K562 (cell line): ENCODE measurements at regions of chr6 and their contacts with region 1.

Region 1: DNA sequence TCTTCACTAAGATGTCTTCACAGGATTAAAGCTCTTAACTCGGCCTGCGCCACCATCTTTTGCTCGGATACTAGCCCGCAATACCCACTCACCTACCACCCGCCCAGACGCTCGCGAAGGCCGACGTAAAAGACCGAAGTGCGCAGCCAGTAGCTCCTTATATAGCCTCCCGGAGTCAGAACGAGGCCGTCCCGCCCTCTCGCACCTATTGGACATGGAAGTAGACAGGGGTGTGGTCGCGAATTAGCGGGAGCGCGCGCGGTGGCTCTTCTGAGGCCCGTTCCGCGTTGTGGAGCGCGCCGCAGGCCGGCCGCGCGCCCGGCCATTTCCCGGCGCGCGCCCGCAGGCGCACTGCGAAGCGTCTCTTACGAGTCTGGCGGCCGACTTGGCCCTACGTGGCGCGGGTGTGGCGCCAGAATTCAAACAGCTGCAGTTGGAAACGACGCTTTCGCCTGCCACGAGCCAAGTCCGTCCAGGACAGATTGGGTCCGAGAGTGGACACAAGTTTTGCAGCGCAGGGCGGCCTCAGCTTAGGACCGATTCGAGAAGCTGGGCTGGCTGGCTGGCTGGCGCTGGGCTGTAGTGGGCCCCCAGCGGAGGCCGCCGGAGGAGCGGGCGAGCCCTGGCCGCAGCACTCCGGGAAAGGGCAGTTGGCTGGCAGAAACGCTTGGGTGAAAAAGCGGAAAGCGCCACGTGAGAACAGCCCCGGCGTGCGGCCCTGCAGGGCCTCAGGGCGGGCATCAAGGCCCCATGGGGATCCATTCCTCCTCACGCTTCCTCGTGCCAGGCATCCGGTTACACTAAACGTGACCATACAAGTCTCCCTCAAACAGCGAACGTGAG is 36.1 kb upstream of the SYNCRIP start:
- DNase-seq: peak; percentile 90 to 99 (median 94)
- ATAC-seq: peak; percentile 80
- H3K4me3 ChIP-seq: peak overlapping the region; percentile 63
- H3K27ac ChIP-seq: peak overlapping the region; percentile 90
- H3K4me1 ChIP-seq: peaks cover 5 to 14% of the 10 kb centered on the region in 2 experiments; a peak in 3 of 5 replicates
- H3K27me3 ChIP-seq: no peaks in the 10 kb centered on the region
- CTCF ChIP-seq: no peak
- EP300 ChIP-seq: no peak
- POLR2A ChIP-seq: peak; percentile 100
- RAD21 ChIP-seq: 0 out of 4 replicates have a peak, but pooled peaks of 1 of the 2 experiments have one; percentile 19

Region 2: GRCh38 chr6:85593438-85594196 is 85.2 kb before region 1 on chr6 and contains the start of gene SNX14:
- CTCF ChIA-PET with region 1: no interaction called
- POLR2A ChIA-PET with region 1: interaction called, 32 read pairs
- in situ Hi-C with region 1: no loop called
- intact Hi-C with region 1: loop called (anchors 5 kb)
- DNase-seq: peak; percentile 88 to 96 (median 90)
- ATAC-seq: peak; percentile 93
- H3K4me3 ChIP-seq: peak within 1 kb of the TSS; percentile 92
- H3K27ac ChIP-seq: peak within 1 kb of the TSS; percentile 97
- H3K4me1 ChIP-seq: peaks cover 13 to 16% of the 10 kb centered on the region in 2 experiments; a peak in 3 of 5 replicates
- H3K27me3 ChIP-seq: no peaks in the 10 kb centered on the region
- CTCF ChIP-seq: no peak; a peak in 1 of 6 replicates
- EP300 ChIP-seq: peak; percentile 30; the same call in 1 of the 2 replicates
- POLR2A ChIP-seq: peak; percentile 88
- RAD21 ChIP-seq: peak in 1 of 2 experiments; percentile 8; a peak in 1 of 4 replicates
- polyA plus RNA-seq, gene SNX14: 46.5 to 61.1 TPM

Region 3: GRCh38 chr6:85620308-85620707 is 58.5 kb before region 1 on chr6:
- CTCF ChIA-PET with region 1: no interaction called
- POLR2A ChIA-PET with region 1: interaction called, 11 read pairs
- in situ Hi-C with region 1: no loop called
- intact Hi-C with region 1: no loop called
- DNase-seq: no peak
- ATAC-seq: no peak; the same call in 2 of the 3 replicates
- H3K4me3 ChIP-seq: no peak overlapping the region
- H3K27ac ChIP-seq: no peak overlapping the region
- H3K4me1 ChIP-seq: no peaks in the 10 kb centered on the region
- H3K27me3 ChIP-seq: no peaks in the 10 kb centered on the region
- CTCF ChIP-seq: no peak
- EP300 ChIP-seq: no peak
- POLR2A ChIP-seq: no peak
- RAD21 ChIP-seq: no peak

Region 4: GRCh38 chr6:85642774-85643536 is 35.9 kb before region 1 on chr6 and contains the start of gene SYNCRIP:
- CTCF ChIA-PET with region 1: no interaction called
- POLR2A ChIA-PET with region 1: interaction called, 188 read pairs
- in situ Hi-C with region 1: loop called (anchors 5 kb)
- intact Hi-C with region 1: loop called (anchors 1 kb)
- DNase-seq: peak; percentile 71 to 98 (median 90)
- ATAC-seq: peak; percentile 86
- H3K4me3 ChIP-seq: peak within 1 kb of the TSS; percentile 87
- H3K27ac ChIP-seq: peak within 1 kb of the TSS; percentile 98
- H3K4me1 ChIP-seq: peaks cover 13 to 19% of the 10 kb centered on the region in 2 experiments; a peak in 4 of 5 replicates
- H3K27me3 ChIP-seq: no peaks in the 10 kb centered on the region
- CTCF ChIP-seq: no peak
- EP300 ChIP-seq: peak; percentile 19; the same call in 1 of the 2 replicates
- POLR2A ChIP-seq: peak; percentile 99
- RAD21 ChIP-seq: no peak
- polyA plus RNA-seq, gene SYNCRIP: 124 to 140 TPM

Region 5: GRCh38 chr6:85660181-85660611 is 18.6 kb before region 1 on chr6:
- CTCF ChIA-PET with region 1: no interaction called
- POLR2A ChIA-PET with region 1: interaction called, 92 read pairs
- in situ Hi-C with region 1: no loop called
- intact Hi-C with region 1: no loop called
- DNase-seq: peak in 1 of 4 experiments; percentile 56
- ATAC-seq: peak; percentile 93
- H3K4me3 ChIP-seq: no peak overlapping the region
- H3K27ac ChIP-seq: no peak overlapping the region
- H3K4me1 ChIP-seq: peaks cover 3 to 5% of the 10 kb centered on the region in 2 experiments; a peak in 2 of 5 replicates
- H3K27me3 ChIP-seq: no peaks in the 10 kb centered on the region
- CTCF ChIP-seq: peak in 2 of 3 experiments; percentile 41 to 43; a peak in 4 of 6 replicates
- EP300 ChIP-seq: no peak
- POLR2A ChIP-seq: no peak
- RAD21 ChIP-seq: peak in 1 of 2 experiments; percentile 51; a peak in 2 of 4 replicates

Region 6: GRCh38 chr6:85772641-85773040 is 93.8 kb after region 1 on chr6:
- CTCF ChIA-PET with region 1: no interaction called
- POLR2A ChIA-PET with region 1: no interaction called
- in situ Hi-C with region 1: no loop called
- intact Hi-C with region 1: no loop called
- DNase-seq: no peak
- ATAC-seq: no peak; the same call in 2 of the 3 replicates
- H3K4me3 ChIP-seq: no peak overlapping the region
- H3K27ac ChIP-seq: no peak overlapping the region
- H3K4me1 ChIP-seq: no peaks in the 10 kb centered on the region
- H3K27me3 ChIP-seq: no peaks in the 10 kb centered on the region
- CTCF ChIP-seq: no peak
- EP300 ChIP-seq: no peak
- POLR2A ChIP-seq: no peak
- RAD21 ChIP-seq: no peak